PC-9 (cell line): ENCODE measurements at regions of chr2 and their contacts with region 1.

Region 1: GRCh38 chr2:172931918-172932520 is 143.6 kb upstream of the MAP3K20 start:
- DNase-seq: peak; percentile 58 to 65
- H3K4me3 ChIP-seq: no peak overlapping the region
- H3K27ac ChIP-seq: no peak overlapping the region; the same call in 1 of the 2 replicates
- H3K4me1 ChIP-seq: peaks cover 27% of the 10 kb centered on the region
- H3K27me3 ChIP-seq: no peaks in the 10 kb centered on the region
- CTCF ChIP-seq: peak; percentile 92

Region 2: DNA sequence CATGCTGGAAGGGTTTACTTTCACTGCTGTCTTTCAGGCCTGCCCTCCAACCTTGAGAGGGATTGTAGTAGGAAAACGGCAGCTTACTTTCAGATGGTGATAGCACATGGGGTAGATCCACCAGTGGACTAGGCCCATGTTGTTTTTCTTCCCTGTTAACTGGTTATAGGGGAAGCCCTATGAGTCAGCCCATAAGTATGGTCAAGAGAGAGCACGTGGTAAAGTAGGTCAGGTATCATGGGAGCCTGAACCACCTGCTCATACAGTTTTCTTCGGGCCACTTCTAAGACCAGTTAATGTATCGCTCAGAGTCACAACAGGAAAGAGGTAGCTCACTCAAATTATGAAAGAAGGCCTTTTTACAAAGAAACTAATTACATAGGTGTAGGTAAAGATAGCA is 343.1 kb before region 1 on chr2:
- CTCF ChIA-PET with region 1: interaction called, 3 read pairs
- POLR2A ChIA-PET with region 1: no interaction called
- intact Hi-C with region 1: loop called (anchors 5 kb)
- DNase-seq: peak in 1 of 2 experiments; percentile 73
- H3K4me3 ChIP-seq: no peak overlapping the region
- H3K27ac ChIP-seq: 0 out of 2 replicates have a peak overlapping the region, but pooled peaks have one; percentile 1
- H3K4me1 ChIP-seq: peaks cover 13% of the 10 kb centered on the region
- H3K27me3 ChIP-seq: no peaks in the 10 kb centered on the region
- CTCF ChIP-seq: no peak

Region 3: DNA sequence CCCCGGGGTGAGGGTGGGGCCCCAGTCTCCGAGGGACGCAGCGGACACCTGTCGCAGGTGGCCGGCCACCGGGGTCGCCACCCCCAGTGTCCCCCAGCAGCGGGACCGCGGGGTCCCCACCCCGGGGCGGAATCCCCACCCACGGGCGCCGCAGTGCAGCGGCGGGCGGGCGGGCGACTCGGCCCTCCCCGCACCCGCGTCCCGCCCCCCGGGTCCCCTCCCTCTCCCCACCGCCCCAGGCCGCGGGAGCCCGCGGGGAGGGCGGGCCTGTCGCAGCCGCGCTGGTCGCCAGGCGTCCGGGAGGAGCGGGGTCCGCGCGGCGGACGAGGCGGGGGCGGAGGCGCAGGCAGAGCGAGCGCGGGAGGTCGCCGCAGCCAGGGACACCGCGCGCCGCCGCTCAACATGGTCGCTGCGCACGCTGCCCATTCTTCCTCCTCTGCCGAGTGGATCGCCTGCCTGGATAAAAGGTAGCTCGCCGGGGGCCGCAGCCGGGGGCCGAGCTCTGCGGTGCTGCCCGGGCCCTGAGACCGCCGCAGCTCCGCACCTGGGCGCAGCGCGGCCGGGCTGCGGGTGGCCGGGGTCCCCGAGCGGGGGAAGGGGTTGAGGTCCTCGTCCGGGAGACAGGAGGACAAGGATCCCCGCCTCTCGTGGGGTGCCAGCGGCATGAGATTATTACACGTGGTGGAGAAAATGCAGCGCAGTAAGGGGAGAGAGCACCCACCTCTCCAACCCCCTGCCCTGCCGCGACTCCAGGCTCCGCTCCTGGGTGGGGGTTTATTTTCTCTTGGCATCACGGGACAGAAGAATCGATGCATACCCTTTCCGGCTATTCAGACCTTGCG is 196.2 kb before region 1 on chr2 and contains the start of gene RAPGEF4:
- CTCF ChIA-PET with region 1: no interaction called
- POLR2A ChIA-PET with region 1: no interaction called
- intact Hi-C with region 1: no loop called
- DNase-seq: peak in 1 of 2 experiments; percentile 18
- H3K4me3 ChIP-seq: peak within 1 kb of the TSS; percentile 40; the same call in 1 of the 2 replicates
- H3K27ac ChIP-seq: no peak within 1 kb of the TSS
- H3K4me1 ChIP-seq: no peaks in the 10 kb centered on the region
- H3K27me3 ChIP-seq: 0 out of 2 replicates have a peak, but pooled peaks cover 2% of the 10 kb centered on the region
- CTCF ChIP-seq: no peak
- total RNA-seq, gene RAPGEF4: 0.53 TPM in 1 of 2 replicates, not detected in the other

Region 4: DNA sequence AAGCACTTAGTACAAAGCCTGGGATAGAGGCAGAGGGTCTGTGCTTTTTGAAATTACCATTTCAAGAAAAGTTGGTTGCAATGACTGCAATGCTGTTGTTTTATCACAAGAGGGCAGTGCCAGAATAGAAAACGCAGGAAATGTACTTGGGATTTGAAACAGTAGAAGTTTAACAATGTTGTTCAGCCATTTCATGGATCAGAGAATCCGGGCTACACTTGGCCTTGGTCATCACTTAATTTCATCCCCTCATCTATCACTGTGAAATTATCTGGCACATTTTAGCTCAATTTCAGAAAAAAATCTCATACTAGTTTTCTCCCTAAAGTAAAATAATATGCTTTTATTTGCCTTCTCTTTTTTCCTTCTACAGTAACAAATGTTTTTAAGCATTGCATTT is 125.5 kb before region 1 on chr2:
- CTCF ChIA-PET with region 1: interaction called, 16 read pairs
- POLR2A ChIA-PET with region 1: no interaction called
- intact Hi-C with region 1: loop called (anchors 1 kb)
- DNase-seq: peak; percentile 23 to 68
- H3K4me3 ChIP-seq: no peak overlapping the region
- H3K27ac ChIP-seq: no peak overlapping the region
- H3K4me1 ChIP-seq: no peaks in the 10 kb centered on the region
- H3K27me3 ChIP-seq: no peaks in the 10 kb centered on the region
- CTCF ChIP-seq: peak; percentile 100

Region 5: DNA sequence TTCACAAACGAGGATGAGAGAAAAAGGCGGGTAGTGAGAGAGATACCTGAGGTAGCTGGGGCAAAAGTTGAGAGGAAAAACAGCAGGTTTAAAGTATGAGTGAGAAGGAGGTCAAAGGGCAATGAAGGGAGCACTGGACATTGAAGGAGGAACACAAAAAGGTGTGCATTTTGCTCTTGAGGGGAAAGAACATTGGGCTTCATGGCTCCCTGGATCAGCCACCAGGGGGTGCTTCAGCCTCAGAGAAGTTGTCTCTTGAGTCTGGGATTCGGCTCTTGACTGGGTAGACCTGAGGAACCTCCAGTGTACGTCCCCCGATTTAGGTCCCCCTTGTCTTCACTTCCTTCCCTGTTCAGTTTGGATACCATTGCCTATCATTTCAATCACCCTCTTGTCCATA is 67.8 kb before region 1 on chr2:
- CTCF ChIA-PET with region 1: interaction called, 5 read pairs
- POLR2A ChIA-PET with region 1: no interaction called
- intact Hi-C with region 1: loop called (anchors 2 kb)
- DNase-seq: peak; percentile 50 to 53
- H3K4me3 ChIP-seq: no peak overlapping the region
- H3K27ac ChIP-seq: no peak overlapping the region
- H3K4me1 ChIP-seq: no peaks in the 10 kb centered on the region
- H3K27me3 ChIP-seq: no peaks in the 10 kb centered on the region
- CTCF ChIP-seq: peak; percentile 79

Region 6: GRCh38 chr2:172972005-172972619 is 40.1 kb after region 1 on chr2:
- CTCF ChIA-PET with region 1: interaction called, 3 read pairs
- POLR2A ChIA-PET with region 1: no interaction called
- intact Hi-C with region 1: loop called (anchors 1 kb)
- DNase-seq: peak; percentile 66 to 69
- H3K4me3 ChIP-seq: no peak overlapping the region
- H3K27ac ChIP-seq: no peak overlapping the region
- H3K4me1 ChIP-seq: peaks cover 30% of the 10 kb centered on the region
- H3K27me3 ChIP-seq: no peaks in the 10 kb centered on the region
- CTCF ChIP-seq: peak; percentile 99

Region 7: DNA sequence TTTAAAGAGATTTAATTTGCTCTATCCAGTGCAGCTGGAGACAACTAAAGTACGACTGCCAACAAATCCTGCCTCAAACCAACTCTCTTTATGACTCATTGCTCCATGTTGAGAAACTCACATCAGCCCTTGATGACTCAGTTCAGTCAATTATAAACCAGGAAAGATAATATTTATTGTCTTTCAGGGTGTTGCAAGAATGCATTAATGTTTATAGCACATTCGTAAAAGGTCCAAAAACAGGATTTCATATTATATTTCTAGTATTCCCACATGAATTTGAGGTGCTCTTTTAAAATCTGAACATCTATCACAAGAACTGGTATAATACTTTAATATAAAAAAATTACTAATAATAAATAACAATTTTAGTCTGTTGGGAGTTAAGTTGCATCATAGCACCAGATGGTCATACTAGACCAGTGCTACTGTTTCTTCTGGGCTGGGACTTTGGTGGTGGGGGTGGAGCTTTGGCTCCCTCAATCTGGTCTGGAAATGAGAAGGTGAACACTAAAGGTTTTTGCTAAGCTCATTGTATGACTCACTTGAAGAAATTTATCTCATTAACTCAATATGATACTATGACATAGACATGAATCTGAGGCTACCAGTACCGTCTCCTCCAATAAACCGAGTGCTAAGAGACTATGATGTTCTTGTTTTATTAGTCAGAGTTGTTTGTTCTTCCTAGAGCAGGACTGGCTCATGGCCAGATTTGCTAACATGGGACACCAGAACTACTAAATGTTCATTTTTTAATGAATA is 117.1 kb after region 1 on chr2:
- CTCF ChIA-PET with region 1: interaction called, 10 read pairs
- POLR2A ChIA-PET with region 1: no interaction called
- intact Hi-C with region 1: no loop called
- DNase-seq: peak; percentile 91 to 100
- H3K4me3 ChIP-seq: peak overlapping the region; percentile 28; the same call in 1 of the 2 replicates
- H3K27ac ChIP-seq: peak overlapping the region; percentile 88
- H3K4me1 ChIP-seq: peaks cover 72% of the 10 kb centered on the region
- H3K27me3 ChIP-seq: no peaks in the 10 kb centered on the region
- CTCF ChIP-seq: 0 out of 2 replicates have a peak, but pooled peaks have one; percentile 6